ENCODE measurements at regions of chr11 and their contacts with region 1.

Region 1: DNA sequence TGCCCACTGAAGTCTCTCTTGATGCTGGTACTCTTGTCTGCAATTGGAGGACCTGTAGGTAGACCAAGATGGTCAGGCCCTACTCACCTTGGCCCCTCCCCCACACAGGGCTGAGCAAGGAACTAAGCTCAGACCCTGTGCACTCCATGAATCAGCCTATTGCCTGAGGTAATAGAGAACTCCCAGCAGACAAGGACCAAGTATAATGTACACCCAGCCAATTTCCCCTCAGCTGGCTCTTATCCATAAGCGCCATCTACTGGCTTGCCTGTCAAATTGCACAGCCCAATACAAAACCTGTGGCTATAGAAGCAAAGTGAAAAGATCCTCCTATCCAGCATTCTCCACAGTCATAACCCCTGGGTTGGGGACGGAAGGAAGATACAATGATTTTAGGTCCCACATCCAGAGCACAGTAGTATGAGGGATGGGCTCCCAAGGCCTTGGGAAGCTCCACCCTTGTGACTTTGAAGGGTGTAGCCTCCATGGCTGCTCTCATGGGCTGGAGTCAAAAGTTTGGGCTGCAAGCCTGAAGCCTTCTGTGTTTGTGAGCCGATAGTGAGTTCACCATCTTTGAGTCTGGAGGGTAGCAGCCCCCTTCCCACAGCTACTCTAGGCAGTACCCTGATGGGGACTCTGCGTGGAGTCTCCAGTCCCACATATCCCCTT is 56.0 kb downstream of the GLYATL2 start:
- DNase-seq: no peak
- H3K4me3 ChIP-seq: no peak overlapping the region
- CTCF ChIP-seq: peak; percentile 71

Region 2: GRCh38 chr11:57974848-57975601 is 813.5 kb before region 1 on chr11:
- CTCF ChIA-PET with region 1: no interaction called
- POLR2A ChIA-PET with region 1: no interaction called
- DNase-seq: no peak
- H3K4me3 ChIP-seq: no peak overlapping the region
- CTCF ChIP-seq: no peak

Region 3: GRCh38 chr11:58579192-58580129 is 209.0 kb before region 1 on chr11:
- CTCF ChIA-PET with region 1: interaction called, 13 read pairs
- POLR2A ChIA-PET with region 1: no interaction called
- DNase-seq: no peak
- H3K4me3 ChIP-seq: peak overlapping the region; percentile 93
- CTCF ChIP-seq: peak; percentile 94

Region 4: DNA sequence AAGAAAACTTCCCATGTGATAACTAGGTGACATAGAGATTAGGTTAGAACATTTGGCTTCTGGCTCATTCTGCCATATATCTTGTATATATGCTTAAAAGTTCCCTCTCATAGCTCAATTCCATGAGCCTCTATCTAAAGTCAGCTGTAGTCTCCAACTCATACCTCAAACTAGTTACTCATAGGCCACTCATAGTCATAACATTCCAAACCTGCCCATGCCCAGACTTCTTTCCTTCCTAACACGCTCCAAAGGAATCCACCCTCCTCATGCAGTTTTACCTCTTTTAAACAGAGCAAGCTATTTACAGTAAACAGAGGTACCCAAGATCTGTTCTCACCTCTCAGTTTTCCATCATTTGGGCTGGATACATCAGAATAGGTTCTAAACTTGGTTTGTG is 16.6 kb after region 1 on chr11:
- CTCF ChIA-PET with region 1: interaction called, 15 read pairs
- POLR2A ChIA-PET with region 1: no interaction called
- DNase-seq: peak; percentile 16
- H3K4me3 ChIP-seq: no peak overlapping the region
- CTCF ChIP-seq: no peak

Measured in AG04449 (cell line).